A549 (cell line): ENCODE measurements at regions of chrX and their contacts with region 1.

Region 1: DNA sequence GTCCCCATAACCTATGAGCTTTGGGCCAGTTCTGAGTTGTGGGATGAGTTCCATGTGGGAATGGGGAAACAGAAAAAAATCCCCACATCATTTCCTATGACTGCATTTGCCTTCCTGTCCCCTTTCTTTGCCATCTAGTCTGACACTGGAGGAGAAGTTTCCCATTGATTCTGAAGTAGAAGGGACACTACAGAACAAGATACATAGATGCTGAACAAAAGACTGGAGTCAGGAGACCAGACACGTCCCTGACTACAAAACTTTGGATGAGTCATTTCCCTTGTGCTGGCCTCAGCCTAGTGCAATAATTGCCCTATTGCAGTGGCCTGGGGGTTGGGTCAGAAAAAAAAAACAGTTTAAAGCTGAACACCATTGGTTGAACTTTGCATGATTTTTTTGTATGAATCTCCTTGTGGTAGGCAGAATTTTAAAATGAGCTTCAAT is 22.1 kb downstream of the BEX3 start:
- DNase-seq: peak; percentile 11 to 64
- ATAC-seq: peak; percentile 88 to 89
- H3K4me3 ChIP-seq: no peak overlapping the region
- H3K27ac ChIP-seq: peak overlapping the region; percentile 60 to 76
- H3K4me1 ChIP-seq: peaks cover 20% of the 10 kb centered on the region
- CTCF ChIP-seq: no peak
- EP300 ChIP-seq: no peak
- POLR2A ChIP-seq: no peak
- RAD21 ChIP-seq: no peak

Region 2: GRCh38 chrX:103343105-103343504 is 55.3 kb before region 1 on chrX:
- CTCF ChIA-PET with region 1: interaction called, 12 read pairs
- POLR2A ChIA-PET with region 1: no interaction called
- DNase-seq: peak; percentile 29 to 41
- ATAC-seq: peak in 1 of 2 experiments; percentile 79; a peak in 3 of 6 replicates
- H3K4me3 ChIP-seq: no peak overlapping the region
- H3K27ac ChIP-seq: no peak overlapping the region
- H3K4me1 ChIP-seq: no peaks in the 10 kb centered on the region
- CTCF ChIP-seq: peak; percentile 71
- EP300 ChIP-seq: no peak
- POLR2A ChIP-seq: no peak
- RAD21 ChIP-seq: peak; percentile 69 to 70

Region 3: GRCh38 chrX:103382877-103383276 is 15.6 kb before region 1 on chrX:
- CTCF ChIA-PET with region 1: no interaction called
- POLR2A ChIA-PET with region 1: no interaction called
- DNase-seq: no peak
- ATAC-seq: no peak
- H3K4me3 ChIP-seq: no peak overlapping the region
- H3K27ac ChIP-seq: no peak overlapping the region
- H3K4me1 ChIP-seq: peaks cover 8% of the 10 kb centered on the region; the same call in 2 of the 3 replicates
- CTCF ChIP-seq: no peak
- EP300 ChIP-seq: no peak
- POLR2A ChIP-seq: no peak
- RAD21 ChIP-seq: no peak